ENCODE measurements at regions of chr12 and their contacts with region 1.

Region 1: GRCh38 chr12:98593351-98594049 is at the start of gene SLC25A3:
- DNase-seq: peak; percentile 99
- H3K4me3 ChIP-seq: peak within 1 kb of the TSS; percentile 89 to 98 (median 91)
- H3K27ac ChIP-seq: peak within 1 kb of the TSS; percentile 67
- H3K4me1 ChIP-seq: peaks cover 13% of the 10 kb centered on the region
- H3K27me3 ChIP-seq: no peaks in the 10 kb centered on the region
- CTCF ChIP-seq: no peak
- POLR2A ChIP-seq: peak; percentile 99
- total RNA-seq, gene SLC25A3: 774 and 797 TPM in 2 replicates

Region 2: DNA sequence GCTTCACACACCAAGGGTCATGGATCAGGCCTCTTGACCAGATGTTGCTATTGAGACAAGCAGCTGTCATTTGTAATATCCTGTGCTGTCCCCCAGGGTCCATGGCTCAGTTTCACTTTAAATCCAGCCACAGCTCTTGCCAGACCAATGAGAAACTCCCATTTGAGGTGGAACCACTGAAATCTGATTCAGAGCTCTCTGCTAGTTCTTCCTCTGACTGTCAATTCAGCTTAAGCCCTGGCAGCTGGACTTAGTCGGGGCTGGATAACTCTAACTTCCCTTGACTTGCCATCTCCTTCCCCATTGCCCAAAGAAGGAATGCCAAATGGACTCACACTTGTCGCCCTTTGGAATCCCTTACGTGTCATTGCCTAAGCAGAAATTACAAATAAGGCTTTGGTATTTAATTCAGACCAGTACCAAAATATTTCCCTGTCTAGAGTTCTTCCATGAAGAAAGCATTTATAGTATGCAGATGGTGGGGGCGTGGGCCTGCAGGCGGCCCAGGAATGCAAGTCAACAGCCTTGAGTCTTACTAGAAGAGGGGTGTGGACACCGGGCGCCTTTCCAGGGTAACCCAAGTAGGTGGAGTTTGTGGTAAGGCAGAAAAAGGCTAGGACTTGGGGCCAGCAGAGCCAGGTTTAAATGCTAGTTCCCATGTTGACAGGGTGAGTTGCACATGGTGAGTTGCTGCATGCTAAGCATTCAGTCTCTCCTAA is 175.0 kb before region 1 on chr12:
- CTCF ChIA-PET with region 1: no interaction called
- POLR2A ChIA-PET with region 1: no interaction called
- dilution Hi-C with region 1: no loop called
- intact Hi-C with region 1: loop called (anchors 2 kb)
- DNase-seq: peak; percentile 51
- H3K4me3 ChIP-seq: no peak overlapping the region
- H3K27ac ChIP-seq: no peak overlapping the region
- H3K4me1 ChIP-seq: peaks cover 2% of the 10 kb centered on the region
- H3K27me3 ChIP-seq: no peaks in the 10 kb centered on the region
- CTCF ChIP-seq: no peak
- POLR2A ChIP-seq: no peak

Region 3: GRCh38 chr12:98490501-98491453 is 102.7 kb before region 1 on chr12:
- CTCF ChIA-PET with region 1: interaction called, 3 read pairs
- POLR2A ChIA-PET with region 1: no interaction called
- dilution Hi-C with region 1: no loop called
- intact Hi-C with region 1: loop called (anchors 1 kb)
- DNase-seq: peak; percentile 96
- H3K4me3 ChIP-seq: no peak overlapping the region
- H3K27ac ChIP-seq: peak overlapping the region; percentile 45
- H3K4me1 ChIP-seq: peaks cover 4% of the 10 kb centered on the region
- H3K27me3 ChIP-seq: no peaks in the 10 kb centered on the region
- CTCF ChIP-seq: peak; percentile 83 to 89
- POLR2A ChIP-seq: no peak

Region 4: DNA sequence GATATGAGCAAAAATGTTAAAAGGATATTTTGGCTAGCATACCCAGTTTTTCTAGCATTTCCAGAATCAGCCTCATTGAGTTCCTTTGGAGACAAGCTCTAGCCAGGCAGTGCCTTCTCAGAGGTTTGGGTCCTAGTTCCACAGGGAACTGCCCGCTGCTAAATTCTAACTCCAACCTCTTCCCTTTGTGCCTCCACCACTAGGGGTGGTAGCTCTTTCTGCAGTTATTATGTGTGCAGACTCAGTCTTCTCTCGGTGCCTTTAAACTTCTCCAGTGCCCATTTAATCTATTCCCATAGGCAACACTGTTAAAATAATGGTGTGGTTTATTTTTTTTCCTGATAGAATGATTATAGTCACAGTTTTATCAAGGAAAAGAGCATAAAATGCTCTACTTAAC is 21.5 kb before region 1 on chr12:
- CTCF ChIA-PET with region 1: interaction called, 31 read pairs
- POLR2A ChIA-PET with region 1: interaction called, 11 read pairs
- dilution Hi-C with region 1: no loop called
- intact Hi-C with region 1: loop called (anchors 2 kb)
- DNase-seq: no peak
- H3K4me3 ChIP-seq: no peak overlapping the region
- H3K27ac ChIP-seq: no peak overlapping the region
- H3K4me1 ChIP-seq: no peaks in the 10 kb centered on the region
- H3K27me3 ChIP-seq: no peaks in the 10 kb centered on the region
- CTCF ChIP-seq: peak; percentile 19 to 39
- POLR2A ChIP-seq: no peak

Region 5: GRCh38 chr12:98644711-98645402 is 51.4 kb after region 1 on chr12 and contains the starts of genes APAF1 and IKBIP:
- CTCF ChIA-PET with region 1: interaction called, 9 read pairs
- POLR2A ChIA-PET with region 1: interaction called, 14 read pairs
- dilution Hi-C with region 1: no loop called
- intact Hi-C with region 1: loop called (anchors 1 kb)
- DNase-seq: peak; percentile 97
- H3K4me3 ChIP-seq: peak within 1 kb of the TSS; percentile 67 to 92 (median 87)
- H3K27ac ChIP-seq: peak within 1 kb of the TSS; percentile 67
- H3K4me1 ChIP-seq: peaks cover 11% of the 10 kb centered on the region
- H3K27me3 ChIP-seq: no peaks in the 10 kb centered on the region
- CTCF ChIP-seq: no peak
- POLR2A ChIP-seq: peak; percentile 65
- total RNA-seq, gene APAF1: 32.1 and 35.2 TPM in 2 replicates
- total RNA-seq, gene IKBIP: 56.2 and 56.8 TPM in 2 replicates

Region 6: GRCh38 chr12:98671459-98671858 is 78.0 kb after region 1 on chr12:
- CTCF ChIA-PET with region 1: no interaction called
- POLR2A ChIA-PET with region 1: interaction called, 10 read pairs
- dilution Hi-C with region 1: no loop called
- intact Hi-C with region 1: no loop called
- DNase-seq: peak; percentile 49
- H3K4me3 ChIP-seq: no peak overlapping the region
- H3K27ac ChIP-seq: no peak overlapping the region
- H3K4me1 ChIP-seq: peaks cover 9% of the 10 kb centered on the region
- H3K27me3 ChIP-seq: no peaks in the 10 kb centered on the region
- CTCF ChIP-seq: no peak
- POLR2A ChIP-seq: no peak

Measured in endothelial cell of umbilical vein (primary cell).